ENCODE measurements at regions of chr1 and their contacts with region 1.

Region 1: DNA sequence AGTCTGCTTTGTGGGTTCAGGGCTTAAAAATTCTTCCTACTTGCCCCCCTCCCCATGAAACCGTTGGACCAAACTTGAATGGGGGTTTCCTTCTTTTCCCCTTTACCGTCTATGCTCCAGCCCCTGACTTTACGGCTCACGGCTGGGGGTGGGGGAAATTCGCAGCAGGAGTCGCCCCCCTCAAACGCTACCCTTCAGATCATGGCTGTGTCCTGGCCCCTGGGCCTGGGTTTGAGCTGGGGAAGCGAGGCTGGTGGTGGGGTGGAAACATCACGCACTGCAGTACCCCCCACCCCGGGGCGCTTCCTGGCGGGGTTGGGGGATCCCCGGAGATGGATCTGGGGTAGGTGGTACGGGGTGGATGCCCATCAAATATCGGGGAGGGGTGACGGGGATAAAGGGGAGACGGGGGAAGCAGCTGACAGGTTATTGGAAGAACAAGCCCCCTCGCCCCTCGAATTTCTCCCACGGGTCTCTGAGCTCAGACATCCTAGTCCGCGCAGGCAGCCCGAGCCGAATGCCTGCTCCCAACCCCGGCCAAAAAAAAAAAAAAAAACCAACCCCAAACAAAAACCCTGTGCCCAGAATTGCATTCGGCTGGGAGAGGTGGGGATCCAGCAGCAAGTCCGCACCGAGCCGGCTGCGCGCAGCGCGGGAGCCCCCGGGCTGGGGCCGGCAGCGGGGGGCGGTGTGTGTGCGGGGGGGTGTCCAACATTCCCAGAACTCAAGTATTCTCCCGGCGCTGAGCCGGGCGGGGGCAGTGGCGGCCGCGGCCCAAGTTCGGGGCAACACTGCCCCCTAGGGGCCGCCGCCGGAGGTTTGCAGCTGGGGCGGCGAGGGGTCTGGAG is 59.0 kb upstream of the ACOT11 start:
- DNase-seq: peak; percentile 84
- ATAC-seq: peak; percentile 65
- H3K4me3 ChIP-seq: peak overlapping the region; percentile 87
- H3K27ac ChIP-seq: peak overlapping the region; percentile 45
- H3K4me1 ChIP-seq: peaks cover 15% of the 10 kb centered on the region
- H3K27me3 ChIP-seq: no peaks in the 10 kb centered on the region
- CTCF ChIP-seq: peak; percentile 91

Region 2: GRCh38 chr1:54158071-54158470 is 330.9 kb before region 1 on chr1:
- CTCF ChIA-PET with region 1: interaction called, 10 read pairs
- POLR2A ChIA-PET with region 1: no interaction called
- intact Hi-C with region 1: no loop called
- DNase-seq: peak; percentile 82
- ATAC-seq: peak; percentile 97
- H3K4me3 ChIP-seq: no peak overlapping the region
- H3K27ac ChIP-seq: no peak overlapping the region
- H3K4me1 ChIP-seq: peaks cover 12% of the 10 kb centered on the region
- H3K27me3 ChIP-seq: no peaks in the 10 kb centered on the region
- CTCF ChIP-seq: no peak

Region 3: GRCh38 chr1:54199765-54200518 is 289.1 kb before region 1 on chr1 and contains the starts of genes CYB5RL and MRPL37:
- CTCF ChIA-PET with region 1: interaction called, 14 read pairs
- POLR2A ChIA-PET with region 1: interaction called, 3 read pairs
- intact Hi-C with region 1: loop called (anchors 1 kb)
- DNase-seq: peak; percentile 97
- ATAC-seq: peak; percentile 97
- H3K4me3 ChIP-seq: peak within 1 kb of the TSS; percentile 97
- H3K27ac ChIP-seq: peak within 1 kb of the TSS; percentile 3; the same call in 1 of the 2 replicates
- H3K4me1 ChIP-seq: peaks cover 24% of the 10 kb centered on the region
- H3K27me3 ChIP-seq: no peaks in the 10 kb centered on the region
- CTCF ChIP-seq: no peak
- total RNA-seq, gene CYB5RL: 3.6 and 11.9 TPM in 2 replicates
- total RNA-seq, gene MRPL37: 191 and 211 TPM in 2 replicates

Region 4: GRCh38 chr1:54310439-54311328 is 178.3 kb before region 1 on chr1:
- CTCF ChIA-PET with region 1: interaction called, 14 read pairs
- POLR2A ChIA-PET with region 1: no interaction called
- intact Hi-C with region 1: no loop called
- DNase-seq: peak; percentile 30
- ATAC-seq: peak; percentile 20; the same call in 1 of the 2 replicates
- H3K4me3 ChIP-seq: no peak overlapping the region
- H3K27ac ChIP-seq: no peak overlapping the region
- H3K4me1 ChIP-seq: no peaks in the 10 kb centered on the region
- H3K27me3 ChIP-seq: no peaks in the 10 kb centered on the region
- CTCF ChIP-seq: peak; percentile 59

Region 5: DNA sequence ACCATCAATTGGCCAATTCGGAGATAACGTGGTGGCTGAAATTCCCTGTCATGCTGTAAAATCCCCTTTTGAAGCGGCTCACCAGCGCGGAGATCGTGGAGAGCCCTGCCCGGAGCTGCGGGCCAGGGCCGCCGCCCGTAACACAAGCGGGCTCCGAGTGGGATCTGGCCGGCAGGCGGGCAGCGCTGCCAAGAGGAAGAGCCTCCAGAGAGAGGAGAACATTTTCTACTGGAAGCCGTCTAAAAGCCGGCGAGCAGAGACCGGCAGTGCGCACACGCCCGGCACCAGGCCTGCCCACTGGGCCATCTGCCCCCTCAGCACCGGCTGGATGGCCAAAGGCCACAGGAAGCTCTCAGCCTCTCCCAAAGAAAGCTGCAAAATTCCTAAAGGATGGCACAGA is 98.3 kb before region 1 on chr1:
- CTCF ChIA-PET with region 1: no interaction called
- POLR2A ChIA-PET with region 1: no interaction called
- intact Hi-C with region 1: no loop called
- DNase-seq: no peak
- ATAC-seq: no peak
- H3K4me3 ChIP-seq: no peak overlapping the region
- H3K27ac ChIP-seq: no peak overlapping the region
- H3K4me1 ChIP-seq: no peaks in the 10 kb centered on the region
- H3K27me3 ChIP-seq: no peaks in the 10 kb centered on the region
- CTCF ChIP-seq: no peak

Region 6: GRCh38 chr1:54406339-54407153 is 82.5 kb before region 1 on chr1 and contains the start of gene SSBP3:
- CTCF ChIA-PET with region 1: interaction called, 26 read pairs
- POLR2A ChIA-PET with region 1: interaction called, 22 read pairs
- intact Hi-C with region 1: loop called (anchors 1 kb)
- DNase-seq: peak; percentile 95
- ATAC-seq: peak; percentile 76
- H3K4me3 ChIP-seq: peak within 1 kb of the TSS; percentile 86
- H3K27ac ChIP-seq: peak within 1 kb of the TSS; percentile 89
- H3K4me1 ChIP-seq: peaks cover 38% of the 10 kb centered on the region
- H3K27me3 ChIP-seq: no peaks in the 10 kb centered on the region
- CTCF ChIP-seq: no peak
- total RNA-seq, gene SSBP3: 13.0 and 15.0 TPM in 2 replicates

Region 7: DNA sequence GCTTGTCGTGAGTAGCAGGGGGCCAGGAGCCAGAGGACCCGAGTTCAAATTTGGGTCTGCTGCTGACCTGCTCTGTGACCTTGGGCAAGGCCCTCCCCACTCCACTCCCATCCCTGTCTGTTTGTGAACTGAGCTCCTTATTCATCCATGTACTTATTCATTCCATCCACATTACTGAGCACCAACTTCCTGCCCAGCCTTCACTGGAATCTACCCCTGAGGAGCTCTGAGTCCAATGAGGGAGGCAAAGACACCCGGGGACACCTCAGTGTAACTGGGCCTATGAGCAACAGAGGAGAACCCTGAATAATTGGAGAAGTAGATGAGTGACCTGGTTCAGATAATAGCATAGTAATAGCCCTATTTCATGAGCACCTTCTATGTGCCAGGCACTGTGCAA is 518.6 kb after region 1 on chr1:
- CTCF ChIA-PET with region 1: interaction called, 14 read pairs
- POLR2A ChIA-PET with region 1: no interaction called
- intact Hi-C with region 1: no loop called
- DNase-seq: peak; percentile 74
- ATAC-seq: peak; percentile 96
- H3K4me3 ChIP-seq: no peak overlapping the region
- H3K27ac ChIP-seq: no peak overlapping the region
- H3K4me1 ChIP-seq: peaks cover 10% of the 10 kb centered on the region
- H3K27me3 ChIP-seq: no peaks in the 10 kb centered on the region
- CTCF ChIP-seq: no peak